Mammary epithelial cell (primary cell): ENCODE measurements at regions of chr6 and their contacts with region 1.

Region 1: DNA sequence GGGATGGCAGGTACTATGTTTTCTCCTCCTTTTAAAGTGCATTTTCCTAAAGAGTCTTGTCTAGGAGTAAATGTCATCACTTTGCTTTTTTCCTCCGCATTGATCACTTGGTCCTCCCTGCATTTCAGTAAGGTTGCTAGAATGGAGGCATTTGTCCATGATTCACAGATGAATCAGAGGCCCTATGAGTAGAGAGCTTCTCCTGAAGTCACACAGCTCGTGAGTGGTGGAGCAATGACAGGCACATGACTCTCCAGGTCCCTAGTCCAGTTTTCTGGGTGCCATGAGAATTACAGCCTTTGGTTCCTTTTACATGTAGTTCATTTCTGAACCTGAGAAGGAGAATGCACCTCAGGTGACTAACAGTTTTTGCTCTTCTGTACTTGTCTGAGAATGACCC is 50.5 kb downstream of the HLA-A start:
- DNase-seq: peak; percentile 75
- H3K4me3 ChIP-seq: no peak overlapping the region
- H3K27ac ChIP-seq: no peak overlapping the region
- H3K4me1 ChIP-seq: peaks cover 16% of the 10 kb centered on the region
- H3K27me3 ChIP-seq: no peaks in the 10 kb centered on the region
- CTCF ChIP-seq: no peak

Region 2: GRCh38 chr6:29924731-29925130 is 68.1 kb before region 1 on chr6:
- CTCF ChIA-PET with region 1: no interaction called
- dilution Hi-C with region 1: no loop called
- in situ Hi-C with region 1: no loop called
- intact Hi-C with region 1: no loop called
- DNase-seq: peak; percentile 69
- H3K4me3 ChIP-seq: no peak overlapping the region
- H3K27ac ChIP-seq: peak overlapping the region; percentile 85
- H3K4me1 ChIP-seq: peaks cover 31% of the 10 kb centered on the region
- H3K27me3 ChIP-seq: no peaks in the 10 kb centered on the region
- CTCF ChIP-seq: no peak

Region 3: DNA sequence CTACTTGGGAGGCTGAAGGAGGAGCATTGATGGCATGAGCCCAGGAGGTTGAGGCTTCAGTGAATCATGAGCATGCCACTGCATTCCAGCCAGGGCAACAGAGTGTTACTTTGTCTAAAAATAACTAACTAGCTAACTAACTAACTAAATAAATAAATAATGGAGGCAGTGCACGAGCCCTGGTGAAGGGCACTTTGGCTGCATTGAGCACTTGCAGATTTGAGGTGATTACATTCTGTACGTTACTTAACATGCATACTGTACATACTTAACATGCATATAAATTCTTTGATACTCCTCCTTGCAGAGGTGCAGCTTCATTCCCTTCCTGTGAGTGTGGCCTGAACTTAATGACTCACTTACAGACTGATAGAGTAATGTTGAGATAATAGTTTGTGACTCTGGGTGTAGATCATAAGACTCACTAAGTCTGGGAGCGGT is 39.8 kb before region 1 on chr6:
- CTCF ChIA-PET with region 1: no interaction called
- dilution Hi-C with region 1: loop called (anchors 5 kb)
- in situ Hi-C with region 1: no loop called
- intact Hi-C with region 1: no loop called
- DNase-seq: peak; percentile 91
- H3K4me3 ChIP-seq: no peak overlapping the region
- H3K27ac ChIP-seq: no peak overlapping the region
- H3K4me1 ChIP-seq: peaks cover 2% of the 10 kb centered on the region
- H3K27me3 ChIP-seq: no peaks in the 10 kb centered on the region
- CTCF ChIP-seq: no peak

Region 4: GRCh38 chr6:29976588-29977424 is 16.0 kb before region 1 on chr6:
- CTCF ChIA-PET with region 1: no interaction called
- dilution Hi-C with region 1: no loop called
- in situ Hi-C with region 1: no loop called
- intact Hi-C with region 1: loop called (anchors 2 kb)
- DNase-seq: peak; percentile 70
- H3K4me3 ChIP-seq: peak overlapping the region; percentile 42 to 48 (median 47)
- H3K27ac ChIP-seq: peak overlapping the region; percentile 32
- H3K4me1 ChIP-seq: peaks cover 4% of the 10 kb centered on the region
- H3K27me3 ChIP-seq: peaks cover 3% of the 10 kb centered on the region
- CTCF ChIP-seq: peak in 1 of 2 donors; percentile 60

Region 5: GRCh38 chr6:30149231-30149630 is 156.4 kb after region 1 on chr6:
- CTCF ChIA-PET with region 1: no interaction called
- dilution Hi-C with region 1: no loop called
- in situ Hi-C with region 1: no loop called
- intact Hi-C with region 1: no loop called
- DNase-seq: no peak
- H3K4me3 ChIP-seq: no peak overlapping the region
- H3K27ac ChIP-seq: no peak overlapping the region
- H3K4me1 ChIP-seq: peaks cover 3% of the 10 kb centered on the region
- H3K27me3 ChIP-seq: no peaks in the 10 kb centered on the region
- CTCF ChIP-seq: no peak